Activated CD4-positive, alpha-beta T cell treated with anti-CD3 and anti-CD28 coated beads, Interleukin-2, amount 10 ng/mL, durations not matched to agents 24 days and 14 days (primary cell): ENCODE measurements at regions of chr14 and their contacts with region 1.

Region 1: DNA sequence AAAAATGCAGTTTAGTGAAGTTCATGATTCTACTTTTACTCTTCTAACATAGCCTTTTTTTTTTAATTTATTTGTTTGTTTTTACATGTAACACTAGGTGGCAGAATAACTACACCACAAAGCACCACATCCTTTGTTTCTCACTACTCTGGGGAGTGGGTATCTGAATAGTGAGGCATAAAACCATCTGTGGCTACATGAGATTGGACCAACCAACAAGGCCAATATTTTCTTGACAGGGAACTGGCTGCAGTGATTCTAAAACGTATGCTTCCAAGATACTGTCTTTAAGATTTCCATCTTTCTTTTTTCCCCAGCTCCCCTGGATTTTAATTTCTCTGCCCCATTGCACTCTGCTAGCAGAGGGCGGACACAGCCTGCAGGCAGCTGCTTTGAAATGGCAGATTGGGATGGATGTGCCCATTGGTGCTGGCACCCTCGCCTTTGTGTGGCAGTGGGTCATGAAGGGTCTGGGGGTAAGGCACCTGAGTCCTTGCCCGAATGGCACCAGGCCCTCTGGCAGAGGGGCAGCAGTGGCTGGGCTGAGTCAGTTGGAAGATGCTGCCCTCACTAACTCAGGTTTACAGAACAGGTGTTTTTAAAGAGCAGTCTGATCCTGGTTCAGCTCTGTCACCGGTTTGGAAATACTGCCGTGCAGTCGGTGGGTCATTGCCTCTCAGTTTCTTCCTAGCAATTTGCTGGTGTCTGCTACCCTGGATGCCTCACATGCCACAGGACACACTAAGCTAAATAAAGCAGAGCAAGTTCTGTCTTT is 429.1 kb downstream of the RAD51B start:
- DNase-seq: peak; percentile 73
- H3K4me3 Mint-ChIP-seq: no peak overlapping the region
- H3K27ac Mint-ChIP-seq: no peak overlapping the region
- H3K4me1 Mint-ChIP-seq: peaks cover 29% of the 10 kb centered on the region
- H3K27me3 Mint-ChIP-seq: no peaks in the 10 kb centered on the region

Region 2: DNA sequence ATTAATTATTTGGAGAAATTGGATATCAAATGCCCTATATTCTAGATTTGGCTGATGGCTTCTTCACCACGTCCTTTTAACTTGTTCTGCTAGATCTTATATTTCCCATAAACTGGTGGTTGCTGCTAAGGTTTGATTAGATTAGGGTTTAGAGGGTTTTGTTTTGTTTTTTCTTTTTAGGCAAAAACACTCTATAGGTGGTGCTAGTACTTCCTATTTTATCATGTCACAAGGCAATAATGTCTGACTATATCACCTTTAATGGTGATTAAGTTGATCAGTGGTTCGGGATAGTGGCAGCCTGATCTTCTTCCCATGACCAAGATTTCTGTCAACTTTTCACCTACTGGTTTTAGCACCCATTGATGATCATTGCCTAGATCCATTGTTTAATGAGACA is 26.1 kb after region 1 on chr14:
- intact Hi-C with region 1: loop called (anchors 2 kb)
- DNase-seq: no peak
- H3K4me3 Mint-ChIP-seq: no peak overlapping the region
- H3K27ac Mint-ChIP-seq: no peak overlapping the region
- H3K4me1 Mint-ChIP-seq: peaks cover 30% of the 10 kb centered on the region
- H3K27me3 Mint-ChIP-seq: no peaks in the 10 kb centered on the region

Region 3: GRCh38 chr14:68297876-68298469 is 49.3 kb after region 1 on chr14:
- intact Hi-C with region 1: no loop called
- DNase-seq: no peak
- H3K4me3 Mint-ChIP-seq: no peak overlapping the region
- H3K27ac Mint-ChIP-seq: no peak overlapping the region
- H3K4me1 Mint-ChIP-seq: peaks cover 14% of the 10 kb centered on the region
- H3K27me3 Mint-ChIP-seq: no peaks in the 10 kb centered on the region

Region 4: DNA sequence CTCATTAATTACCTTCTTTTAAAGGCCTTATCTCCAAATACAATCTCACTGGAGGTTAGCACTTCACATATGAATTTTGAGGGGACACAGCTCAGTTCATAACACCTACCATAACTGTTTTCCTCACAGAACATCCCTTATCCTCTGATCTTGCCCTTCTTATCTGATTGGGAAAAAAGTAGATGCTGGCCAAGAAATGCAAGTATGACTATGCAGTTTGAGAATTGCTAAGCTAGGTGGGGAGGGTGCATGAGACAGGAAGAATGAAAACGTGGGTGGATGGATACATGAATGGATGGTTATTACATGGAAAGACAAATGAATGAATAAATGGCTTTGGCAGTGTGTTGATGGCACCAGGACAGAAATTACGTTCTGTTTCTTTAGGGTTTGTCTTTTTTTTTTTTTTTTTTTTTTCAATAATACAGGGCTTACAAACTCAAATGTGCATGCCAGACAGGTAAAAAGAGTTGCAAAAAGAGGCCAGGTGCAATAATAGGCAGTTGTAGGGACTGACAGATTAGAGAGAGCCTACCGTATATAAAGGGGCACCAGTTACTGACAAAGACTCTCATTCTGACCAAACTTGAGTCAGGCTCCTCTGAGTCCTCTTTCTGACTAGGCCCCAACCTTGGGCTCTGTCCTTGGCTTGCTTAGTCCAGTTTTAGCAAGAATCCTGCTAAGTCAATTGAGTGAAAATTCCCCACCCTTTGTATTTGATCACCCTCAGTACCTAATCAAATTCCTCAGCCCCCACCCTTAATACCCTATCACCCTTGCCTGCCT is 239.3 kb after region 1 on chr14:
- intact Hi-C with region 1: loop called (anchors 10 kb)
- DNase-seq: no peak
- H3K4me3 Mint-ChIP-seq: no peak overlapping the region
- H3K27ac Mint-ChIP-seq: no peak overlapping the region
- H3K4me1 Mint-ChIP-seq: peaks cover 25% of the 10 kb centered on the region
- H3K27me3 Mint-ChIP-seq: no peaks in the 10 kb centered on the region

Region 5: DNA sequence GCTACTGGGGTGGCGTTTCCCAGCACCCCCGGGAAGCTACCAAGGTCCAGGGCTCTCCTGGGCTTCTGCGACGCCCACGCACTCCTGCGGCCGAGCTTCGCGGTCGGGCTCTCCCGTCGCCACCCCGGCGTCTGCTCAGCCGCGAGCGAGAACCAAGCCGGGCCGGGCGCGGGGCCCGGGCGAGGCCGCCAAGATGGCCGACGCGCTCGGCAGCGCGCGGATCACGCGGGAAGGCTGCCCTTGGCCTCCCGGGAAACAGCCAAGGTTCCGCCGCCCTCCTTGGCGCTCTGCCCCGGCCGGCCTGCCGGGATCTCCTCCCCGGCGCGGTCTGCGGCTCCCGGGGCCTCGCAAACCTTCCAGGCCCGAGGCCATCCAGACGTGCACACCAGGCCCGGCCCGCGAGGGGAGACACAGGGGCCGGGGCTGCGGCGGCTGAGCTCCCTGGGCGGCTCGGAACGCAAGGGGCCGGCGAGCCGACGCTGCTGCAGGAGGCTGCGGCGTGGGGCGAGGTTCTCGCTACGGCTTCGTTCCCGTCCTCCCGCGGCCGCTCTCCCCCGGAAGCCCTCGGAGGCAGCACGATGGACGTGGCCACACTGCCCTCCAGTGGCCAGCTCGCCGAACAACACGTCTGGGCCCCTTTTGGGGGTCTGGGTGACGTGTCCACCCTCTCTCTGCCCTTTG is 567.7 kb after region 1 on chr14:
- intact Hi-C with region 1: loop called (anchors 1 kb)
- DNase-seq: peak; percentile 97
- H3K4me3 Mint-ChIP-seq: peak overlapping the region; percentile 79
- H3K27ac Mint-ChIP-seq: peak overlapping the region; percentile 90
- H3K4me1 Mint-ChIP-seq: peaks cover 56% of the 10 kb centered on the region
- H3K27me3 Mint-ChIP-seq: no peaks in the 10 kb centered on the region